ENCODE measurements at regions of chr6 and their contacts with region 1.

Region 1: GRCh38 chr6:151690768-151691562 is 116.5 kb upstream of the ESR1 start:
- DNase-seq: no peak
- H3K4me3 ChIP-seq: peak overlapping the region; percentile 32 to 45
- H3K27ac ChIP-seq: peak overlapping the region; percentile 79
- H3K4me1 ChIP-seq: peaks cover 14% of the 10 kb centered on the region
- H3K27me3 ChIP-seq: no peaks in the 10 kb centered on the region
- CTCF ChIP-seq: no peak
- POLR2A ChIP-seq: no peak

Region 2: GRCh38 chr6:149840345-149841075 is 1850.5 kb before region 1 on chr6:
- intact Hi-C with region 1: loop called (anchors 5 kb)
- DNase-seq: peak in 1 of 2 donors; percentile 85
- H3K4me3 ChIP-seq: no peak overlapping the region
- H3K27ac ChIP-seq: no peak overlapping the region
- H3K4me1 ChIP-seq: no peaks in the 10 kb centered on the region
- H3K27me3 ChIP-seq: no peaks in the 10 kb centered on the region
- CTCF ChIP-seq: peak; percentile 29 to 43 (median 36)
- POLR2A ChIP-seq: no peak

Region 3: GRCh38 chr6:151121900-151122299 is 569.1 kb before region 1 on chr6:
- intact Hi-C with region 1: no loop called
- DNase-seq: no peak
- H3K4me3 ChIP-seq: no peak overlapping the region
- H3K27ac ChIP-seq: no peak overlapping the region
- H3K4me1 ChIP-seq: no peaks in the 10 kb centered on the region
- H3K27me3 ChIP-seq: no peaks in the 10 kb centered on the region
- CTCF ChIP-seq: no peak
- POLR2A ChIP-seq: no peak

Region 4: GRCh38 chr6:151765444-151765886 is 74.5 kb after region 1 on chr6:
- intact Hi-C with region 1: loop called (anchors 5 kb)
- DNase-seq: no peak
- H3K4me3 ChIP-seq: no peak overlapping the region
- H3K27ac ChIP-seq: peak overlapping the region; percentile 67
- H3K4me1 ChIP-seq: peaks cover 5% of the 10 kb centered on the region
- H3K27me3 ChIP-seq: no peaks in the 10 kb centered on the region
- CTCF ChIP-seq: peak; percentile 50 to 67 (median 64)
- POLR2A ChIP-seq: no peak